Activated CD4-positive, alpha-beta T cell treated with anti-CD3 and anti-CD28 coated beads, Interleukin-2, amount 10 ng/mL, durations not matched to agents 24 days and 14 days (primary cell): ENCODE measurements at regions of chr6 and their contacts with region 1.

Region 1: DNA sequence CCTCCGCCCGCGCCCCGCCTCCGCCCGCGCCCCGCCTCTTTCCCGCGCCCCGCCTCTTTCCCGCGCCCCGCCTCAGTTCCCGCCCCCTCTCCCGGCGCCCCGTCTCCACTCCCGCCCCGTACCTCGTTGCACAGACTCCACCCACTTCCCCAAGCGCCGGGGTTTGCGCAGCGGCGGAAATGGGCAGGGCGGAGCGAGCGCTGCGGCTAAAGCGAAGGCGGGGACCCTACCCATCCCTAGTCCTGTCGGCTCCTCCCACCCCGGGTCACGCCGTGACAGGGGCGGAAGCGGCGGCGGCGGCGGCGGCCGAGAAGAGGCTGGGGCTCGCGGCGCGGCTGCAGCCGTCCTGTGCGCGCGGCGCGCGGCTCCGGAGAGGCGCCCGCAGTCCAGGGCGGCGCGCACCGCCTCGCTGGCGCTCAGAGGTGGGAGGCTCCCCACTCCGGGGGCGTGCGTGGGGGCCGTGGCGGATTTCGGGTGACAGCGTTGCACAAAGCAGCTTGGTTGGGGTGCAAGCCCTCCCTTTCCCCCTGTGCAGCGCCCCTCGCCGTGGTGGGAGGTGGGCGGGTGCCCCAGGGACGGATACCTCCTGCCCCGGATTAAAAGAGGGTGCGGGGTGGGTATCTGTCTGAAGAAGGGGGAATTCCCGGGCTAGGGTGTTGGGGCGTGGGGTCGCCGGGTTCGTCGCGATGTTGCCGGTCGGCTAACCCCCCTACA is at the start of gene KDM1B:
- DNase-seq: peak; percentile 100
- H3K4me3 Mint-ChIP-seq: peak within 1 kb of the TSS; percentile 97
- H3K27ac Mint-ChIP-seq: peak within 1 kb of the TSS; percentile 92
- H3K4me1 Mint-ChIP-seq: peaks cover 20% of the 10 kb centered on the region
- H3K27me3 Mint-ChIP-seq: peaks cover 4% of the 10 kb centered on the region
- total RNA-seq, gene KDM1B: 8.5 and 8.6 TPM in 2 replicates

Region 2: DNA sequence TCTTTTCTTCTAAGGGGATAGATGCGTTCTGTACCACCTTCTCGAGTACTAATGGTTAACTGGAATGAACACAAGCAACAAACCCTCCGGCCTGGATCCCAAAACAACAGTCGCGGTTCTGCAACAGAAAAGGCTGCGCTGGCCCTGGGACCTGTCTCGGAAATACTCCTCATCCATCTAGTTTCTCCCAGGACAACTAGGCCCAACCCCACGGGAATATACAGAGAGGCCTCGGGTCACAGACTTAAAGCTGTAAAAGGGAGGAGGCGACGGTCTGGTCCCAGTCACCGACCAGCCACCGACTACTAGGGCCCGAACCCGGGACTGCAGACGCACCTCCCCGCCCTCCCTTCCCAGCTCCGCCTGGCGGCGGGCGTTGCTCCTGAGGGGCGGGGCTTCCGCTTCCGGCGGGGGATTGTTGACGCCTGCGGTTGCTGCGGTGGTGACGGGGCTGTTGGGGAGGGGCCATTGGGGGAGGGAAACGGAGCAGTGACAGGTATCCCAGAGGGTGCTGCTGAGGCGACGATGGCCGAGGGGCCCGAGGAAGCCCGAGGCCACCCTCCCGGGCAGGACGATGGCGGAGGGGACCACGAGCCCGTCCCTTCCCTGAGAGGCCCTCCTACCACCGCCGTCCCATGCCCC is 555.3 kb before region 1 on chr6 and contains the start of gene FAM8A1:
- intact Hi-C with region 1: loop called (anchors 2 kb)
- DNase-seq: peak; percentile 98
- H3K4me3 Mint-ChIP-seq: peak within 1 kb of the TSS; percentile 90
- H3K27ac Mint-ChIP-seq: peak within 1 kb of the TSS; percentile 80
- H3K4me1 Mint-ChIP-seq: peaks cover 30% of the 10 kb centered on the region
- H3K27me3 Mint-ChIP-seq: no peaks in the 10 kb centered on the region
- total RNA-seq, gene FAM8A1: 3.7 and 4.0 TPM in 2 replicates

Region 3: GRCh38 chr6:18122124-18123093 is 32.9 kb before region 1 on chr6 and contains the start of gene NHLRC1:
- intact Hi-C with region 1: loop called (anchors 2 kb)
- DNase-seq: peak; percentile 91
- H3K4me3 Mint-ChIP-seq: peak within 1 kb of the TSS; percentile 85
- H3K27ac Mint-ChIP-seq: peak within 1 kb of the TSS; percentile 8
- H3K4me1 Mint-ChIP-seq: peaks cover 11% of the 10 kb centered on the region
- H3K27me3 Mint-ChIP-seq: peaks cover 61% of the 10 kb centered on the region
- total RNA-seq, gene NHLRC1: 0.09 and 0.26 TPM in 2 replicates

Region 4: DNA sequence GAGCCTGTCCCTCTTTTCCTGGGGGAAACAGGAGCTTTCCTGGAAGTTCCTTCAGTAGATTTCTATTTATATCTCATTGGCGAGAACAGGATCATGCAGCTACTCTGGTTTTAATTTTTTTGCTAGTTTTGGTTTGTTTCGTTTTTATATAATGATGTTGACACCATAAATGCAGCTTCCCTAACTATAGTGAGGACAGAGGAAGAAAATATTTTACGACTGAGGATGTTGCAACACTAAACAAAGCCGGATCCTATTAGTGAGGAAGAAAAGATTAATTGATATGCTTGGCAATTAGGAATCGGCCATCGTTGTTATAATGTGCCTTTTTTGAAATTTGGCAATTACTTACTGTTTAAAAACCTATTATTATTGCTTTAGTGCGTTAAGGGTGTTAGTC is 16.6 kb after region 1 on chr6:
- intact Hi-C with region 1: no loop called
- DNase-seq: no peak
- H3K4me3 Mint-ChIP-seq: no peak overlapping the region
- H3K27ac Mint-ChIP-seq: no peak overlapping the region
- H3K4me1 Mint-ChIP-seq: no peaks in the 10 kb centered on the region
- H3K27me3 Mint-ChIP-seq: no peaks in the 10 kb centered on the region

Region 5: DNA sequence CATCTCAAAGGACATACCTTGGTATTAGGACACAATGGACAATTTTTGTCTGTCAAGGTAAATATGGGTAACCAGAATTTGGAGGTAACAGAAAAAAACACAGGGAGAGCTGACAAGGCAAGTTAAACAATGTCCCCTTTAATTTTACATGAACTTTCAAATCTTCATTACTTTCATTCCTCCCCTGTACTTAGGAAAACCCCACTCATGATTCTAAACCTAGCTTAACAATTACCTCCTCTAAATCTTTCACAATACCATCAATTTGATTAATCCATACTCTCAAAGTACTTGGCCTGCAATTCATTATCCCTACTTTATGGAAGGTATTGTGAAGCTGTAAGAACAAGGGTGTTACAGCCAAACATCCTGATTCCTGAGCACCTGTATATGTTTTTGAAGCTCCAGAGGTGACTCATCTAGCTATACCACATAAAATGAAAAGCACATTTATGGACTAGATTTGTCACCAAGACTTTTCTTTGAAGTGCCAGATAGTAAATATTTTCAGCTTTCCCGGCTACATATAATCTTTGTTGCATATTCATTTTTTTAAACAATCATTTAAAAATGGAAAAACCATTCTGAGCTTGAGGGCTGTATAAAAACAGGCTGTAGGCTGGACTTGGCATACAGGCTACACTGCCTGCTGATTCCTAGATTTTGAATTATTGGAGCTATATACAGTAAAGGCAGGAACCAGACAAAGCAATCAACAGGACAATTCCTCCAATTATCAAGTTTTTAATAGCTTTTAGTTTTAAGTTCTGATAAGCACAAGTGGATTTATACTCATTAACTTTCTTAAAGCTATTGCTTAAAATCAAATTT is 86.1 kb after region 1 on chr6:
- intact Hi-C with region 1: loop called (anchors 2 kb)
- DNase-seq: peak; percentile 18
- H3K4me3 Mint-ChIP-seq: peak overlapping the region; percentile 38
- H3K27ac Mint-ChIP-seq: peak overlapping the region; percentile 43
- H3K4me1 Mint-ChIP-seq: peaks cover 51% of the 10 kb centered on the region
- H3K27me3 Mint-ChIP-seq: no peaks in the 10 kb centered on the region